ENCODE measurements at regions of chr10 and their contacts with region 1.

Region 1: GRCh38 chr10:101569838-101570766 is 18.0 kb downstream of the POLL start:
- DNase-seq: peak; percentile 81 to 94 (median 92)
- ATAC-seq: peak; percentile 89 to 91
- H3K4me3 ChIP-seq: peak overlapping the region; percentile 72
- H3K27ac ChIP-seq: no peak overlapping the region
- H3K4me1 ChIP-seq: no peaks in the 10 kb centered on the region
- H3K27me3 ChIP-seq: no peaks in the 10 kb centered on the region

Region 2: DNA sequence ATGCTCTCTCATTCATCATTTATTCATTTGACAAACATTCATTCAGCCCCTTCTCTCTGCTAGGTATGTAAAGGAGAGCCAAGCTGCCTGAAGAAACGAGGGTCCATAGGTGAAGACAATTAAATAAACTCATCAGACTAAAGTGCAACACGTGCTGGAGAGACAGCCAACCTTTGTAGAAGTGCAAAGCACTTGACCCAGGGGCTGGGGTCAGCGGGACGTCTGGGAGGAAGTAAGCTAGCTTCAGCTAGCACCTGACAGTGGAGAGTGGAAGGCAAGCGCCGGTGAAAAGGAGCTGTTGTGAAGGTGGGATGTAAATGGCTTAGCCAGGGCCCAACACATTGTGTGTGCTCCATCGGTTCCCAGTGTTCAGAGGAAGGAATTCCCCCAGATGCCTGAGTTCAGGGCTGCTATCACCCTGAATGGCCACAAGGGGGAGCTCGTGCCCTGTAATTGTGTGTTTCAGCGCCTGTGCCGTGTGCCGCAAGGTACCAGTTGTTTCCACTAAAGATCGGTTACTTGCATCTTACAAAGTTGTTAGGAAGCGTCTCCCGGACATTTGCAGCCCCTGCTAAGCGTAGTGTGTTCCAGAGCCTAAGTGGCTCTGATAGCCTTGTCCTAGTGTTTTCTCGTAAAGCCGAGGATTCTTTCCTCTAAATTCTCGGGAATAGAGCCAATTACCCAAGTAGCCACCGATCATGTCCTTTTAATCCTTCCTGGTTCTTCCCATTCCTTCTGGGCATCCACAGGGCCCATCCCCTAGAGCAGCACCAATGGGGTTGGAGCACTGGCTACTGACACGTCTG is 408.4 kb before region 1 on chr10:
- intact Hi-C with region 1: loop called in 1 of 4 experiments (anchors 5 kb)
- DNase-seq: peak; percentile 52 to 77 (median 71)
- ATAC-seq: peak; percentile 86 to 89
- H3K4me3 ChIP-seq: peak overlapping the region; percentile 42
- H3K27ac ChIP-seq: no peak overlapping the region
- H3K4me1 ChIP-seq: no peaks in the 10 kb centered on the region
- H3K27me3 ChIP-seq: no peaks in the 10 kb centered on the region

Region 3: DNA sequence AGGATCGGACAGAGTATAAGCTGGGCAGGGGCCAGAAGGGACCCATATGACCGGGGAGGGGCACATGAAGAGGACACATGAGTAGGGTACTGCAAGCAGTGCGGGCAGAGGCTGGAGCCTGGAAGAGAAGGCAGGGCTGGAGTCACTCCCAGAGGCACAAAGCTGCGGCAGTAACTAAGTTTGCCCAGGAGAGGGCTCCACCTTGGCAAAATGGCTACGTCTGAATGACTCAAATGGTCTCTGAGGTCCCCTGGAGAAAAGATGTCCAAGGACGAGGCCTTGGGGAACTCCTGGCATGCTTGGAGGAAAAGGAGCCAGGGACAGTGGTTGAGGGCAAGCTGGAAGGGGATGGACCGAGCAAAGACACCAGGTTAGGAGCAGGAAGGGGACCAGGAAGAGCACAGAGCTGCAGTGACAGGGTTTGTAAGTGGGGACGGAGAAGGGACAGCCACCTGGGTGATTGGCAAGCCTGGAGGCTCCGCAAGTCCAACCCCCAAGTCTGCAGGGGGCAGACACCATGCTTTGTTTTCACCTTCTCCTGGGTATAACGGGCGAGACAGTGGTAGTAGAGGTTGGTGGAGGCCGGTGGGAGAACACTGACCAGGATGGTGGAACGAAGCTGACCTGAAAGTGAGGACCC is 297.8 kb before region 1 on chr10:
- intact Hi-C with region 1: loop called in 2 of 4 experiments (anchors 10 kb)
- DNase-seq: peak; percentile 51 to 84 (median 76)
- ATAC-seq: peak; percentile 74 to 86
- H3K4me3 ChIP-seq: no peak overlapping the region
- H3K27ac ChIP-seq: no peak overlapping the region
- H3K4me1 ChIP-seq: no peaks in the 10 kb centered on the region
- H3K27me3 ChIP-seq: no peaks in the 10 kb centered on the region

Region 4: GRCh38 chr10:101779544-101780186 is 209.6 kb after region 1 on chr10:
- intact Hi-C with region 1: no loop called
- DNase-seq: peak; percentile 83 to 94 (median 93)
- ATAC-seq: peak; percentile 1 to 67
- H3K4me3 ChIP-seq: peak overlapping the region; percentile 34
- H3K27ac ChIP-seq: no peak overlapping the region
- H3K4me1 ChIP-seq: peaks cover 5% of the 10 kb centered on the region
- H3K27me3 ChIP-seq: no peaks in the 10 kb centered on the region

Region 5: GRCh38 chr10:102208311-102209035 is 638.4 kb after region 1 on chr10:
- intact Hi-C with region 1: no loop called
- DNase-seq: peak in 1 of 3 donors; percentile 60
- ATAC-seq: peak; percentile 66 to 70
- H3K4me3 ChIP-seq: no peak overlapping the region
- H3K27ac ChIP-seq: peak overlapping the region; percentile 53
- H3K4me1 ChIP-seq: peaks cover 4% of the 10 kb centered on the region
- H3K27me3 ChIP-seq: no peaks in the 10 kb centered on the region